Activated T-helper 2 cell treated with anti-CD3 and anti-CD28 coated beads, Interferon-gamma antibody, Interleukin-2, Interleukin-4, amounts not matched to agents 10 μg/mL and 5 μg/mL and 100 μg/mL, durations not matched to agents 14 hours and 24 hours and 36 hours (primary cell): ENCODE measurements at regions of chr1 and their contacts with region 1.

Region 1: GRCh38 chr1:185681034-185681633 is 53.1 kb upstream of the HMCN1 start:
- DNase-seq: no peak
- H3K4me3 Mint-ChIP-seq: no peak overlapping the region
- H3K27ac Mint-ChIP-seq: no peak overlapping the region
- H3K4me1 Mint-ChIP-seq: peaks cover 14% of the 10 kb centered on the region
- H3K27me3 Mint-ChIP-seq: peaks cover 7% of the 10 kb centered on the region

Region 2: GRCh38 chr1:185238447-185238846 is 442.7 kb before region 1 on chr1:
- intact Hi-C with region 1: loop called (anchors 5 kb)
- DNase-seq: no peak
- H3K4me3 Mint-ChIP-seq: no peak overlapping the region
- H3K27ac Mint-ChIP-seq: no peak overlapping the region
- H3K4me1 Mint-ChIP-seq: peaks cover 22% of the 10 kb centered on the region
- H3K27me3 Mint-ChIP-seq: no peaks in the 10 kb centered on the region